Heart left ventricle (tissue), 16 donors: ENCODE measurements at regions of chr1 and their contacts with region 1.

Region 1: DNA sequence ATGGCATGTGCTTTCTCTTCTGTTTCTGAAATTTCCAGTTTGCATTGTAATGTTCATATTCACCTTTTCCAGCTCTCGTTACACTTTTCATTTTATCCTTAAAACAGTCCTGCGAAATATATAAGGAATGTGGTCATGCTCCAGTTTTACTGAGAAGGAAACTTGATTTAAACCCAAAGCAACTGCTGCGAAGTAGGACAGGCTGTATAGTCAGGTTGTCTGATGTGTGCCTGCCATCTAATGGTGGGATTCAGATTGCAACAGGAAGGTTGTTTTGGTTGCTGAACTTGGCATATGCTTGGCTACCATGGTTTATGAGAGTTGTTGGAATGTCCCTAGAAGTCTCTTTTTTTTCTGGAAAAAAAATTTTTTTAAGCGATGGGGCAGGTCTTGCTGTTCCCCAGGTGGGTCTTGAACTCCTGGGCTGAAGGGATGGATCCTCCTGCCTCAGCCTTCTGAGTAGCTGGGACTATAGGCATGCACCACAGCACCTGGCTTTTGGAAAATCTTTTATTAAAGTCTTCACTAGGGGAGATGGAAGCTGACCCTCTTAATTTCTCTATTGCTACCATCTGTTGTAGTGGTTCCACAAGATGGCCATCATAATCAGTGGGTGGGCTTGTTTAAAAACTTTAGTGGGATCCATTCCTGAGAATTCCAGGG is 86.9 kb downstream of the UCK2 start:
- DNase-seq: peak in 2 of 5 donors; percentile 50 to 65
- ATAC-seq: peak; percentile 53 to 86 (median 78)
- H3K4me3 ChIP-seq: no peak overlapping the region
- H3K27ac ChIP-seq: no peak overlapping the region
- H3K4me1 ChIP-seq: peaks cover 0 to 20% (median 10%) of the 10 kb centered on the region in 12 donors
- H3K27me3 ChIP-seq: no peaks in the 10 kb centered on the region
- CTCF ChIP-seq: peak; percentile 75 to 94 (median 84)
- POLR2A ChIP-seq: no peak

Region 2: GRCh38 chr1:165392634-165393571 is 521.4 kb before region 1 on chr1:
- intact Hi-C with region 1: loop called in 9 of 10 experiments (anchors 5 to 10 kb)
- DNase-seq: peak; percentile 84 to 91 (median 88)
- ATAC-seq: peak; percentile 91 to 94 (median 93)
- H3K4me3 ChIP-seq: peak overlapping the region in 7 of 12 donors; percentile 6 to 33 (median 11)
- H3K27ac ChIP-seq: peak overlapping the region in 3 of 12 donors; percentile 6 to 15 (median 10)
- H3K4me1 ChIP-seq: peaks cover 0 to 18% (median 6%) of the 10 kb centered on the region in 12 donors
- H3K27me3 ChIP-seq: peaks cover 0 to 59% (median 0%) of the 10 kb centered on the region in 9 donors
- CTCF ChIP-seq: peak; percentile 87 to 98 (median 96)
- POLR2A ChIP-seq: no peak

Region 3: GRCh38 chr1:165403835-165404482 is 510.3 kb before region 1 on chr1:
- intact Hi-C with region 1: loop called in 9 of 10 experiments (anchors 5 to 10 kb)
- DNase-seq: peak in 1 of 5 donors; percentile 29
- ATAC-seq: peak in 3 of 4 donors; percentile 52 to 62 (median 61)
- H3K4me3 ChIP-seq: no peak overlapping the region
- H3K27ac ChIP-seq: no peak overlapping the region
- H3K4me1 ChIP-seq: peaks cover 0 to 4% (median 0%) of the 10 kb centered on the region in 12 donors
- H3K27me3 ChIP-seq: peaks cover 0 to 14% (median 0%) of the 10 kb centered on the region in 9 donors
- CTCF ChIP-seq: peak; percentile 40 to 72 (median 65)
- POLR2A ChIP-seq: no peak

Region 4: DNA sequence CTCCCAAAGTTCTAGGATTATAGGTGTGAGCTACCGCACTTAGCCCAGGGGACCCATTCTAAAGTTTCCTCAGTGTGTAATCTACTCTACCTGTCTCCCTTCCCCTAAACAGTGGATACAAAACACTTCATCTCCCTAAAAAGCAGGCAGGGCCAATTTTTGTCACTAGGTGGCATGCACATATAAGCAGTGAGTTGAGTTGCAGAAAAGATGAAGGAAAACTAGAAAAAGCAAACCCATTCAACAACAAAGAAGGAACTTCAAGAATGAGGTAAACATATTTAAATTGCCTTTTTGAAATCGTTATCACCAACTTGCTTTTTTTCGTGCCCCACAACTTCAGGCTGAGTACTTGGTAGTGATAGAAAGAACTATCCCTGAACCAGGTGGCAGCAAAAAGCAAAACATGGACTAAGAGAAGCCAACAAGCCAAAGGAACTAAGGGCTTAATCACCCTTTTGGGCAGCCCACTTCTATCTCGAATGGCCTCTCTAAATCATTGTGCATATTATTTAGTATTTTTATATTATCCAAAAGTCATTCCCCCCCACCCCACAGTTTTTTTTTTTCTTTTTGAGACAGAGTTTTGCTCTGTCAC is 196.2 kb before region 1 on chr1:
- intact Hi-C with region 1: loop called (anchors 1 to 5 kb)
- DNase-seq: peak in 2 of 5 donors; percentile 21
- ATAC-seq: peak in 2 of 4 donors; percentile 41 to 49
- H3K4me3 ChIP-seq: no peak overlapping the region
- H3K27ac ChIP-seq: no peak overlapping the region
- H3K4me1 ChIP-seq: no peaks in the 10 kb centered on the region
- H3K27me3 ChIP-seq: no peaks in the 10 kb centered on the region
- CTCF ChIP-seq: peak; percentile 47 to 77 (median 58)
- POLR2A ChIP-seq: no peak

Region 5: GRCh38 chr1:165827268-165828102 is 86.8 kb before region 1 on chr1 and contains the start of gene UCK2:
- intact Hi-C with region 1: loop called in 2 of 10 experiments (anchors 5 kb)
- DNase-seq: peak; percentile 81 to 88 (median 85)
- ATAC-seq: peak; percentile 77 to 96 (median 94)
- H3K4me3 ChIP-seq: peak within 1 kb of the TSS; percentile 77 to 98 (median 86)
- H3K27ac ChIP-seq: peak within 1 kb of the TSS; percentile 67 to 93 (median 88)
- H3K4me1 ChIP-seq: peaks cover 0 to 24% (median 10%) of the 10 kb centered on the region in 12 donors
- H3K27me3 ChIP-seq: no peaks in the 10 kb centered on the region
- CTCF ChIP-seq: peak in 4 of 12 donors; percentile 1 to 40 (median 8)
- POLR2A ChIP-seq: peak in 1 of 2 donors; percentile 34
- total RNA-seq, gene UCK2: 7.6 to 26.6 (median 13.9) TPM